Activated CD4-positive, alpha-beta T cell treated with anti-CD3 and anti-CD28 coated beads for 36 hours (primary cell): ENCODE measurements at regions of chr19 and their contacts with region 1.

Region 1: GRCh38 chr19:12881172-12881808 is at the start of gene DNASE2:
- DNase-seq: peak; percentile 96
- ATAC-seq: peak; percentile 75
- H3K4me3 Mint-ChIP-seq: peak within 1 kb of the TSS; percentile 88
- H3K27ac Mint-ChIP-seq: peak within 1 kb of the TSS; percentile 82
- H3K4me1 Mint-ChIP-seq: peaks cover 24% of the 10 kb centered on the region
- H3K27me3 Mint-ChIP-seq: no peaks in the 10 kb centered on the region
- total RNA-seq, gene DNASE2: 22.5 to 24.3 TPM

Region 2: GRCh38 chr19:12806239-12807081 is 74.8 kb before region 1 on chr19 and contains the start of gene RNASEH2A:
- CTCF ChIA-PET with region 1: interaction called, 4 read pairs
- POLR2A ChIA-PET with region 1: no interaction called
- intact Hi-C with region 1: loop called in 1 of 2 experiments (anchors 1 kb)
- DNase-seq: peak; percentile 94
- ATAC-seq: peak; percentile 93
- H3K4me3 Mint-ChIP-seq: peak within 1 kb of the TSS; percentile 89
- H3K27ac Mint-ChIP-seq: peak within 1 kb of the TSS; percentile 80
- H3K4me1 Mint-ChIP-seq: peaks cover 24% of the 10 kb centered on the region
- H3K27me3 Mint-ChIP-seq: no peaks in the 10 kb centered on the region
- total RNA-seq, gene RNASEH2A: 27.0 to 51.1 TPM

Region 3: DNA sequence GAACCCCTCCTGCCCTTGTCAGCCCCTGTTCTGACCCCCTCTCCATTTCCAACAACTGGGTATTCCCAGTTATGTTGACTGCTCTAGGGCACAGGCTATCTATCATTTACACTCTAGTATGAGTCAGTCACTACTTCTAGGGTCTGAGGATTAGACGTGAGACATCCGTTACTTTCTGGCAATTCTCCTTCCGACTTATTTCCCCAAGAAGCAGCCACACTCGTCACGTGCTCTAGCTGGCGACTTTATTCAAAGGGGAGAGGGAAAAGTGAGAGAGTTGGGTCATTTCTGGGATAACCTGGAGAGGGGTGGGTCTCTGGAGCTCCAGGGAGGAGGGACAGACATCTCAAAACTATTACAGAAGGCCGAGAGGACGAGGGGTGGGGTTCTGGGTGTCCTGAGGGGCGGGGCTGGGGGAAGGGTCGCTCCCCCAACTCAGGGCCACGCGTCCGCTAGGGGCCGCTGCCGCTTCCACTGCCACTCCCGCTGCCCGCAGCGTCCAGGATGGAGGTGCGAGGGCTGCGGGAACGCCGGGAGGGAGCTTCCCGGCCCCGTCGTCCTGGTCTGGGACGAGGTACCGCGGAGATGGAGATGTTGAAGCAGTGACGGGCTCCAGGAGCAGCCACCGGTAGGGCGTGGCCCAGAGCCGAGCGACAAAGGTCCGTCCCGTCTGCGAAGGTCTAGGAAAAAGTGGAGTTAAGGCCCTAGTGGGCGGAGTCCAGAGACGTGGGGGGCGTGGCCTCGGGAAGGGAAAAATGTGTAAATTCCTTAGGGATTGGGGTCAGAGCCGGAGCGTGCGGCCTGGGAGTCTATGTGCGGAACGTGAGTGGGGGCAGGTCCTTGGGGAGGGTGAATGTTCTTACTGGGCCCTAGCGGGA is 55.8 kb before region 1 on chr19:
- CTCF ChIA-PET with region 1: interaction called, 3 read pairs
- POLR2A ChIA-PET with region 1: interaction called, 15 read pairs
- intact Hi-C with region 1: no loop called
- DNase-seq: peak; percentile 65
- ATAC-seq: peak; percentile 50
- H3K4me3 Mint-ChIP-seq: no peak overlapping the region
- H3K27ac Mint-ChIP-seq: no peak overlapping the region
- H3K4me1 Mint-ChIP-seq: peaks cover 9% of the 10 kb centered on the region
- H3K27me3 Mint-ChIP-seq: peaks cover 35% of the 10 kb centered on the region

Region 4: GRCh38 chr19:12913851-12914690 is 32.8 kb after region 1 on chr19:
- CTCF ChIA-PET with region 1: interaction called, 8 read pairs
- POLR2A ChIA-PET with region 1: no interaction called
- intact Hi-C with region 1: loop called in 1 of 2 experiments (anchors 1 kb)
- DNase-seq: peak; percentile 70
- ATAC-seq: peak; percentile 81
- H3K4me3 Mint-ChIP-seq: peak overlapping the region; percentile 36
- H3K27ac Mint-ChIP-seq: peak overlapping the region; percentile 94
- H3K4me1 Mint-ChIP-seq: peaks cover 26% of the 10 kb centered on the region
- H3K27me3 Mint-ChIP-seq: no peaks in the 10 kb centered on the region

Region 5: GRCh38 chr19:12938234-12939025 is 57.1 kb after region 1 on chr19 and contains the start of gene CALR:
- CTCF ChIA-PET with region 1: no interaction called
- POLR2A ChIA-PET with region 1: interaction called, 4 read pairs
- intact Hi-C with region 1: loop called (anchors 1 to 2 kb)
- DNase-seq: peak; percentile 99
- ATAC-seq: peak; percentile 89
- H3K4me3 Mint-ChIP-seq: peak within 1 kb of the TSS; percentile 99
- H3K27ac Mint-ChIP-seq: peak within 1 kb of the TSS; percentile 96
- H3K4me1 Mint-ChIP-seq: peaks cover 59% of the 10 kb centered on the region
- H3K27me3 Mint-ChIP-seq: no peaks in the 10 kb centered on the region
- total RNA-seq, gene CALR: 557 to 569 TPM

Region 6: GRCh38 chr19:12945479-12946091 is 64.3 kb after region 1 on chr19 and contains the start of gene RAD23A:
- CTCF ChIA-PET with region 1: no interaction called
- POLR2A ChIA-PET with region 1: no interaction called
- intact Hi-C with region 1: loop called in 1 of 2 experiments (anchors 1 kb)
- DNase-seq: peak; percentile 100
- ATAC-seq: peak; percentile 81
- H3K4me3 Mint-ChIP-seq: peak within 1 kb of the TSS; percentile 88
- H3K27ac Mint-ChIP-seq: peak within 1 kb of the TSS; percentile 97
- H3K4me1 Mint-ChIP-seq: peaks cover 55% of the 10 kb centered on the region
- H3K27me3 Mint-ChIP-seq: no peaks in the 10 kb centered on the region
- total RNA-seq, gene RAD23A: 189 to 265 TPM

Region 7: DNA sequence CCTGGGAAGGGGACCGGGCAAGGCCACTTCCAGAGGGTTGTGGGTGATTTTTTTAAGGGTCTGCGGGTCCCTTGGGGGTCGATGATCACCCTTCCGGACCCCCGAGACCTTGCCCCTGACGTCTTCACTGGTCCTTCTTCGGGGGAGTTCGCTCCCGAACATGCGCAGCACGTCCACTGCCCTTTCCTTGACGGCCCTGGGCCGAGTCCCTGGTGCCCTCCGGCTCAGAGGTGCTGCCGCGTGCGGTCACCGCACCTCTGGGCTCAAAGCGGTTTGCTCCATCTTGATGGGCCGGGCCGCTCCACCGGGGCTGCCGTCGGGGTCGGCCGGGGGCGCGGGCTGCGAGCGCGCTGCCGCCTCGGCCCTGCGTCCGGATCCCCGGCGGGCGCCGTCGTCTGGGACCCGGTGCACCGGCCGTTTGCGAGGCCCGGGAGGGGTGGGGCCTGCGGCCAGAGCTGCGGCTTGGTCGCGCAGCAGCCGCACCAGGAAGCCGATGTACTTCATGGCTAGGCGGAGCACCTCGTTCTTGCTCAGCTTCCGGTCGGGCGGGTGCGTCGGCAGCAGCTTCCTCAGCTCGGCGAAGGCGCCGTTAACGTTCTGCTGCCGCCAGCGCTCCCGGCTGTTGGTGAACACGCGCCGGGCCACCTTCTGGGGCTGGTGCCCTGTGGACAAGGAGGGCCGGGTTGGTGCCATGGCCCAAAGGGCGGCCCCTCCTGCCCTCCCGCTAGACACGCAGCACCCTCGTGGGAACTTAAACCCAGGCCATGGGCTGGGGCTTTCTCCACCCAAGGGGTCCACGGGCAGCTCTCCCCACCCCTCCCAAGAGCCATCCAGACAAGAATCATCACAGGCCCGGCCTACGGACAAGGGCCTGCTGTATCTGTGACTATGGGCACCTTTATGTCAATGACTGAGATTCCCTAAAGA is 218.0 kb after region 1 on chr19:
- CTCF ChIA-PET with region 1: no interaction called
- POLR2A ChIA-PET with region 1: no interaction called
- intact Hi-C with region 1: loop called in 1 of 2 experiments (anchors 5 kb)
- DNase-seq: peak; percentile 89
- ATAC-seq: peak; percentile 61
- H3K4me3 Mint-ChIP-seq: peak overlapping the region; percentile 65
- H3K27ac Mint-ChIP-seq: peak overlapping the region; percentile 85
- H3K4me1 Mint-ChIP-seq: peaks cover 54% of the 10 kb centered on the region
- H3K27me3 Mint-ChIP-seq: peaks cover 32% of the 10 kb centered on the region